ENCODE measurements at regions of chr21 and their contacts with region 1.

Region 1: DNA sequence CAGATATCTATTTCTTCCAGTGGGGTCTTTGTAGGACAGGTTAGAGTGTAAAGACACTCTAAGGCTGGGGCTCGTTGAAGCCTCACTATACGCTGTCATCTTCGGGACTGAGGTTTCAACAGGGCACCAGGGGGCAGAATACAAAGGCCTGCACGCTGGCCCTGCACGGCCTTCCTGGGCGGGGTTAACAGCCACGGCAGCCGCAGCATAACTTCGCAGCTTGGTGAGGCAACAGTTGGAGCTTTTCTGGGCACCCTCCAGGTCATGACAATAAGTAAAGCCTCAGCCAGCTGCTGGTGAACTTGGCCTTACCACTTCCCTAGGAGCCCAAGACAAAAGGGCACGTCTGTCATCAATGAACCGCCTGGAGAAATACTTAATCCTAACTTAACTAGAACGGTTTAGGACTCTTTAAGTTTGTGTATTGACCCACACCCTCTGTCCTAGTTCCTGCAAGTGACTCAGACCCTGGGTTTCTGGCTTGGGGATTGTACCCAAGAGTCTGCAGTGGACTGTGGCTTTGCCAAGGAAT is 2.3 kb upstream of the RUNX1 start:
- DNase-seq: peak; percentile 83 to 86 (median 84)
- H3K4me3 ChIP-seq: peak overlapping the region in 1 of 2 donors; percentile 4
- H3K4me3 Mint-ChIP-seq: peak overlapping the region; percentile 51 to 100 (median 94)
- H3K27ac ChIP-seq: peak overlapping the region; percentile 82
- H3K27ac Mint-ChIP-seq: peak overlapping the region; percentile 92 to 100 (median 99)
- H3K4me1 ChIP-seq: peaks cover 33% of the 10 kb centered on the region
- H3K4me1 Mint-ChIP-seq: peaks cover 26 to 55% (median 35%) of the 10 kb centered on the region in 4 donors
- H3K27me3 ChIP-seq: no peaks in the 10 kb centered on the region
- H3K27me3 Mint-ChIP-seq: peaks cover 1 to 3% of the 10 kb centered on the region in 2 donors

Region 2: DNA sequence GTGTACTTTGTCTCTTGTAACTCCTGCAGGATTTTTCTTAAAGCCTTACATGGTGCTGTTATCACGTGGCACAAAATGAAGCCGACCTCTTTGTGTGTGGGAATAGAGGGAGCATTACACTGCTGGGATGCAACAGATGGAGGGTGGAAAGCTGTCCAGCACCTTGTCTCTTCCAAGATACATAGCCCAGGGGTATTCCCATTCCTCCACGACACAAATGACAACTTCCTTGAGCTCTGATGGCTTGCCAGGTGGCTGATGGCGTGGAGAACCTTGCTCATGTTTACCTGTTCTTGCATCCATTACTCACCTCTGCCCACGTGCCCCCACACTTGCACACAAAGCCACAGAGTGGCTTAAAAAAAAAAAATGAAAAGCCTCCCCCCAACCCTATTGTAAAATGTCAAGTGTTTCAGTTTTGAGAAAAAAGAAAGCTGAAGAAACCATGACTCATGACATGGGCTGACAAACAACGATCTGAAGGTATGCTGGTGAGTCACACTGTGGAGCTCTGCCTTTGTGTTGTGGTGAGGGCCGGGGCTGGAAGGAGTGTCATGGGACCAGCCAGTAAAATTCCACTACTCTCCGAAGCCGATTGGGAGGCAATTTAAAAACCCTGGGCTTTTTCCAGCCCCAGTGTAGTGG is 1103.8 kb before region 1 on chr21:
- CTCF ChIA-PET with region 1: no interaction called
- POLR2A ChIA-PET with region 1: interaction called, 3 read pairs
- intact Hi-C with region 1: loop called (anchors 2 kb)
- DNase-seq: peak; percentile 86 to 97 (median 91)
- H3K4me3 ChIP-seq: peak overlapping the region; percentile 21 to 36
- H3K4me3 Mint-ChIP-seq: peak overlapping the region; percentile 49 to 94 (median 85)
- H3K27ac ChIP-seq: peak overlapping the region; percentile 94
- H3K27ac Mint-ChIP-seq: peak overlapping the region; percentile 92 to 99 (median 98)
- H3K4me1 ChIP-seq: peaks cover 79% of the 10 kb centered on the region
- H3K4me1 Mint-ChIP-seq: peaks cover 58 to 90% (median 68%) of the 10 kb centered on the region in 4 donors
- H3K27me3 ChIP-seq: no peaks in the 10 kb centered on the region
- H3K27me3 Mint-ChIP-seq: no peaks in the 10 kb centered on the region

Region 3: GRCh38 chr21:34933609-34934335 is 117.6 kb before region 1 on chr21:
- CTCF ChIA-PET with region 1: interaction called, 9 read pairs
- POLR2A ChIA-PET with region 1: interaction called, 70 read pairs
- intact Hi-C with region 1: loop called (anchors 1 kb)
- DNase-seq: peak; percentile 62 to 75 (median 73)
- H3K4me3 ChIP-seq: peak overlapping the region; percentile 20 to 44
- H3K4me3 Mint-ChIP-seq: peak overlapping the region; percentile 66 to 92 (median 86)
- H3K27ac ChIP-seq: peak overlapping the region; percentile 73
- H3K27ac Mint-ChIP-seq: peak overlapping the region; percentile 94 to 99 (median 96)
- H3K4me1 ChIP-seq: peaks cover 90% of the 10 kb centered on the region
- H3K4me1 Mint-ChIP-seq: peaks cover 75 to 91% (median 82%) of the 10 kb centered on the region in 4 donors
- H3K27me3 ChIP-seq: no peaks in the 10 kb centered on the region
- H3K27me3 Mint-ChIP-seq: no peaks in the 10 kb centered on the region

Region 4: DNA sequence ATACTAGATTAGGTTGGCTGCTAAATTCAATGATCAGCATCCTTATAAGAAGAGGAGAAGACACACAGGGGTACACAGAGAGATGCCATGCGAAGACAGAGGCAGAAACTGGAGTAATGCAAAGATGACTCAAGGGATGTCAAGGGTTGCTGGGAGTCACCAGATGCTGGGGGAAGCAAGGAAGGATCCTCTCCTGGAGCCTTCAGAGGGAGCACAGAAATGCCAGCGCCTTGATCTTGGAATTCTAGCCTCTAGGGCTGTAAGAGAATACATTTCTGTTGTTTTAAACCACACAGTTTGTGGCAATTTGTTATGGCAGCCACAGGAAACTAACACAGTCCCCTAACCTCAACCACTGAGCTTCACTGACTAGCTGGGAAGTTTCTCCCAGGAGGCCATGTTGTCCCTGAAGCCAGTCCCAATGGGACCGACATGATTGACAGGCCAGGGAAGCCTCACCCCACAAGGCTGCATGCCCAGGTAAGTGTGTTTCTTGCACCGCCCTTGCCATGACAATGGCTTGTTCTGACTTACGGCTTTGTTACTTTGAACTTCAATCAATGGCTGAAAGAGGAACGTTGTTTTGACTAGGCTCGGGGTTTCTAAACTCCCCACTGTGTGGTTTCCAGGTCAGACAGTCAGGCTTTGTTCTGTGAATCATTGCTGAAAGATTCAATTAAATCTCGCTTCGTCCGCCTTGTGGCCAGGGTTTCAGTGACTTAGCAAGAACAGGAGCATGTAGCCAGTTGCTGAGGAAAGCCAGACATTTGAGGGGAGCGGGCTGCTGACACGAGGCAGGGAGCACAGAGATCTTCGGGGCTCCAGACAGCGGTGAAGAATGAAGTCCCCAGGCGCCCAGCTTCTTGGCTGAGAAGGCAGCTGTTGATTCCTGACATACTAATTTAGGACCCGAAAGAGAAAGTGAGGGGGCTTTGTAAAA is 64.5 kb before region 1 on chr21:
- CTCF ChIA-PET with region 1: interaction called, 17 read pairs
- POLR2A ChIA-PET with region 1: interaction called, 51 read pairs
- intact Hi-C with region 1: loop called (anchors 1 kb)
- DNase-seq: peak; percentile 54 to 87 (median 66)
- H3K4me3 ChIP-seq: peak overlapping the region in 1 of 2 donors; percentile 1
- H3K4me3 Mint-ChIP-seq: peak overlapping the region; percentile 74 to 93 (median 80)
- H3K27ac ChIP-seq: peak overlapping the region; percentile 54
- H3K27ac Mint-ChIP-seq: peak overlapping the region; percentile 93 to 97 (median 95)
- H3K4me1 ChIP-seq: peaks cover 100% of the 10 kb centered on the region
- H3K4me1 Mint-ChIP-seq: peaks cover 36 to 95% (median 87%) of the 10 kb centered on the region in 4 donors
- H3K27me3 ChIP-seq: no peaks in the 10 kb centered on the region
- H3K27me3 Mint-ChIP-seq: no peaks in the 10 kb centered on the region

Region 5: DNA sequence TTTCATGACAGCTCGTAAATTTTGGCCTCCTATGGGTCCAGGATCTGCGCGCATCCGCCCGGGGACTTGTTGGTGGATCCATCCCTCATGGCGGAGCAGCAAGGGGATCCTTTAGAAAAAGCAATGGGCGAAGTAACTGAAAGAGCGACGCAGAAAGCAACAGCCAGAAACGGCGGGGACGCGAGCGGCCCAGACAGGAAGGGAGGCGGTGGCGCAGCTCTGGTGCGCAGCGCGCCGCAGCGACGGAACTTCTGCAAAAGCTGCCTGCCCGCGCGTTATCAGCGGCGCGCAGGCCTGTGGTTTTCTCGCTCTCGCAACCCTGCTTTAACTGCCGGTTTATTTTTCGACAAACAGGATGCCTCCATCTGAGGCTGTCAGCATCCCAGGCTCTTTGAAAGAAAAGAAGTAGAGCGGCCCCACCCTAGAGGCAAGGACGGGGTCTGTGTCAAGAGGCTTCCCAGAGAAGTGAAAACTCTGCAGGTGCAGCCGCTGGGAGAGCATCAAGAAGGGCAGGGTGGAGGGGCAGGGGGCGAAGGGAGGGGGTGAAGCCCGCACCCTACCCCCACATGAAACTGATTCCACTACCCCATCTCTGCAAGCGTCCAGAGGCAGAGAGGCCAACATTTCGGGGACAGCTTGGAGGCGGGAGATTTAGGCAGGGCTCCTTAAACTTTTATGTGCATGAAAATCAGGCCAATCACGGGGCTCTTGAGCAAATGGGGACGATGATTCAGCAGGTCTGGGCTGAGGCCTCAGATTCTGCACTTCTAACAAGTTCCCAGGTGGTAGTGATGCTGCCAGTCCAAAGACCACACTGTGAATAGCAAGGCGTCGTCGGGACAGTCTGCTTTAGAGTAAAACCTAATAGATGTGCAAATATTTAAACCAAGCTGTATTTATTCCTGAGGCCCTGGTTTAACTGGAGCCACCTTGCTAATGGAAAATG is 24.5 kb before region 1 on chr21:
- CTCF ChIA-PET with region 1: interaction called, 26 read pairs
- POLR2A ChIA-PET with region 1: interaction called, 729 read pairs
- intact Hi-C with region 1: loop called (anchors 1 kb)
- DNase-seq: peak; percentile 88 to 91 (median 89)
- H3K4me3 ChIP-seq: peak overlapping the region; percentile 48 to 53
- H3K4me3 Mint-ChIP-seq: peak overlapping the region; percentile 83 to 97 (median 89)
- H3K27ac ChIP-seq: peak overlapping the region; percentile 71
- H3K27ac Mint-ChIP-seq: peak overlapping the region; percentile 97 to 100 (median 98)
- H3K4me1 ChIP-seq: peaks cover 92% of the 10 kb centered on the region
- H3K4me1 Mint-ChIP-seq: peaks cover 72 to 96% (median 87%) of the 10 kb centered on the region in 4 donors
- H3K27me3 ChIP-seq: no peaks in the 10 kb centered on the region
- H3K27me3 Mint-ChIP-seq: no peaks in the 10 kb centered on the region

Region 6: GRCh38 chr21:35400233-35400957 is 349.0 kb after region 1 on chr21:
- CTCF ChIA-PET with region 1: interaction called, 19 read pairs
- POLR2A ChIA-PET with region 1: interaction called, 4 read pairs
- intact Hi-C with region 1: loop called (anchors 1 kb)
- DNase-seq: peak; percentile 39 to 66 (median 63)
- H3K4me3 ChIP-seq: no peak overlapping the region
- H3K4me3 Mint-ChIP-seq: no peak overlapping the region
- H3K27ac ChIP-seq: no peak overlapping the region
- H3K27ac Mint-ChIP-seq: no peak overlapping the region
- H3K4me1 ChIP-seq: no peaks in the 10 kb centered on the region
- H3K4me1 Mint-ChIP-seq: peaks cover 0 to 2% (median under 1%) of the 10 kb centered on the region in 4 donors
- H3K27me3 ChIP-seq: no peaks in the 10 kb centered on the region
- H3K27me3 Mint-ChIP-seq: peaks cover 1 to 3% of the 10 kb centered on the region in 2 donors